GM10248 (cell line): ENCODE measurements at regions of chr11 and their contacts with region 1.

Region 1: DNA sequence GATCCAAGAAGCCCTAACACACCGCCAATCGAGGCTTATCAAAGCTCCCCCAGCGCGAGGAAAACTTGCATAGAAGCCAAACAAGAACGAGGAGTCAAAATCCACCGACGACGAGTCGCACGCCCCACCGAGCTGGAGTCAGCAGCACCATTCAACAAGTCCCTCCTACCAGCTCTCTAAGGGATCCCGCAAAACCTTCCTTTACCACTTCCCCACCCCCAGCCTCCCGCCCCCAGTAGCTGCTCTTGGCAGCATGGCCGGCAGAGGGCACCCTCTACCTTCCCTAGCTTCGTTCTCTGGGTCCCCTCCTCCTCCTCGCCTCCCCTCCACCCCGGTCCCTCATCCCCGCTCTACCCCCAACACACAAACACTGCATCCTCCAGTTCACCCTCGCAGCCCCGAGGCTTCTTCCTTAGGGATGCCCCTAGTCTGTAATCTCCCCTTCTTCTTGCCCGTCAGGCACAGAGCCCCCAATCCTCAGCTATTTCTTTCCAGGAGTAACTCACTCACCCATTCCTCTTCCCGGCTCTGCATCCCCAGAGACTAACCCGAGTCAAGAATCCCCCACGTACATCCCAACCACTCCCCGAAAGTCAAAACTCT is 1.3 kb downstream of the BDNF start:
- DNase-seq: peak; percentile 79
- CTCF ChIP-seq: peak; percentile 78

Region 2: GRCh38 chr11:27621405-27622161 is 77.4 kb before region 1 on chr11:
- CTCF ChIA-PET with region 1: no interaction called
- POLR2A ChIA-PET with region 1: no interaction called
- DNase-seq: no peak
- CTCF ChIP-seq: no peak

Region 3: GRCh38 chr11:28529540-28530410 is 830.8 kb after region 1 on chr11:
- CTCF ChIA-PET with region 1: interaction called, 112 read pairs
- POLR2A ChIA-PET with region 1: no interaction called
- DNase-seq: peak; percentile 13
- CTCF ChIP-seq: no peak

Region 4: DNA sequence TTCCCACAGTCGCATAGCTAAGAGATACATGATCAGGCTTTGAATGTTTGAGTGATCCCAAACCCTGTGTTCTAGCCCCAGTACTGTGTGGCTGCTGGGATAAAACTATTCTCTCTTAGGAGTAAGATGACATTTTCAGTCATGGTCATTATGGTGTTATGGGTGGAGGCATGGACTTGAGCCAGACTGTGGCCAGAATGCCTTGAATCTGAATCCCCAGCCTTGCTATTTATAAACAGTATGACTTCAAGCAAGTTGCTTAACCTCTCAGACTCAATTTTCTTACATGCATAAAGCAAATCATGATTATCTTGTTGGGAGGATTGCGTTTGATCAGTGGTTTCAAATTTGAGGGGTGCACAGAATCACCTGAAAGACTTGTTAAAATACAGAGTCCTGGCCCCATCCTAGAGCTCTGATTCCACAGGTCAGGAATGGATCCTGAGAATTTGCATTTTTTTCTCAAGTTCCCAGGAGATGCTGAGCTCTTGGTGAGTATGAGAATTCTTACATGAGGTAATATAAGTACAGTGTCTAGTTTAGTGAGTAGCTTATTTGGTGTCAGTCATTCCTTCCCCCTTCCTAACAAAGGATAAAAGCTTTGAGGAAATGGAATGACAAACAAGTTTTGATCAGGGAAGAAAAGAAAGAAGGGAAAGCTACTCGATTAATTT is 981.0 kb after region 1 on chr11:
- CTCF ChIA-PET with region 1: interaction called, 22 read pairs
- POLR2A ChIA-PET with region 1: no interaction called
- DNase-seq: no peak
- CTCF ChIP-seq: no peak

Region 5: DNA sequence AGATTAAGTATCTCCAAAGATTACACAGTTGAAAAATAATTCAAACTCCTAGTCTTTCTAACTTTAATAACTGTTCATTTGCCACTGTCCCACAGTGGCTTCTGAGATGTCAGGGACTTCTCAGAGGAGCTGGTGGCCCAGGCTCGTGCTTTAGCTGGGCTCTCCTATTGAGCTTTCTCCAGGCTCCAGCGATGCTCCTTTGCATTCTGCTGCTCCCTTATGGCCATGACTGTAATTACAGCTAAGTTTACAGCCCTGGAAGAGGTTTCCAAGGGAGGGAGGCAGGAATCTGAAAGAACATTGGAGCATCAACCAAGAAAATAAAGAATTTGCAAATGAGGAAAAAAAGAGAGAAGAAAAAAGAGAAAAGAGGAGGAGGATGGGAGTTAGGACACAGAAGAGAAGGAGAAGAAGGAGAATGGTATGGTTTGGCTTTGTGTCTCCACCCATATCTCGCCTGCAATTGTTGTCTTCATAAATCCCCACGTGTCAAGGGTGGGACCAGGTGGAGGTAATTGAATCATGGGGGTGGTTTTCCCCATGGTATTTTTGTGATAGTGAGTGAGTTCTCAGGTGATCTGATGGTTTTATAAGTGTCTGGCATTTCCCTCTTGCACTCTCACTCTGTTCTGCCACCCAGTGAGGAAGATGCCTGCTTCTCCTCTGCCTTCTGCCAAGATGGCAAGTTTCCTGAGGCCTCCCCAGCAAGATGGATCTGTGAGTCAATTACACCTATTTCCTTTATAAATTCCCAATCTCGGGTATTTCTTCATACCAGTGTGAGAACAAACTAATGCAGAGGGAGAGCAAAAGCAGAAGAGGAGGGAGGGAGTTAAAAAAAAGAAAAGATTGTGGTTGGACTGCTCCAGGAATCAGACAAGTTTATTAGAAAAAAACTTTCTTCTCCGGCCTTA is 1460.8 kb after region 1 on chr11:
- CTCF ChIA-PET with region 1: interaction called, 23 read pairs
- POLR2A ChIA-PET with region 1: interaction called, 3 read pairs
- DNase-seq: peak; percentile 7
- CTCF ChIP-seq: peak; percentile 51

Region 6: GRCh38 chr11:29328961-29329441 is 1630.0 kb after region 1 on chr11:
- CTCF ChIA-PET with region 1: interaction called, 37 read pairs
- POLR2A ChIA-PET with region 1: no interaction called
- DNase-seq: peak; percentile 8
- CTCF ChIP-seq: peak; percentile 68